ENCODE measurements at regions of chr7 and their contacts with region 1.

Region 1: DNA sequence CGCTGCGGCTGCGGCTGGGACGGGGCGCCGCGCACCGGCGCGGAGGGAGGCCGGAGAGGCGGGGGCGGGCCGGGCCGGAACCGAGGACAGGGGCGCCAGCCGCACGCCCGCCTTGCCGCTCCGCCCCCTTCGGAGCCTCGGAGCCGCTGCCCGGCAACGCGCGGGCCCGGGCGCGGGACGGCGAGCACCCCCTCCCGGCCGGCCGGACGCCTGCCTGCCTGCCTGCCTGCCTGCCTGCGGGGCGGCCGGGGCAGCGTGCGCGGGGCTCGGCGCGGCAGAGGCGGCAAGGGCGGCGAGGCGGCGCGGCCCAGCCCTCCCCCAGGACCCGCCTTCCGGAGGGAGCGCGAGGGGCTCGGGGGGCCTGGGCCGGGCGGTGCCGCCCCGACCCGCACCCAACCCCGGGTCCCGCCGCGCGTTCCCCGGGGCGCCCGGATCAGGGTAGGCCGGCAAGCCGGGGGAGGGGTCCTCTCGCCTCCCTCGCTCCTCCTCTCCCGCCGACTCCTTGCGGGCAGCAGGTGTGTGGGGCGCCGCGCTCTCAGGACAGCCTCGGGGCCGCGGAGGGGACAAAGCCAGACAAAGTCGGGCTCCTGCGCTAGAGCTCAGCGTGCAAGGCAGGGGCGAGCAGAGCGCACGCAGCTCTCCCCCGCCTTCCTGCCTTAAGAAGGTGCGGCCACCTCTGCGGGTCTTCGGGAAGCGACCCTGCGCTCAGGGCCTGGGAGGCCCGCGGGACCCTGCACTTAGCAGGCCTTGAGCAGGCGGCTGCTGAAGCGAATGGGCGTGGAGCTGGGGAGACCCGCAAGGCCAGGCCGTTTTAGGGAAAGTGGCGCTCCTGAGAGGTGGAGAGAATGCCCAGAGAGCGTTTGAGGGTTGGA is at the start of gene KIAA1549:
- DNase-seq: no peak
- total RNA-seq, gene KIAA1549: 1.4 TPM

Region 2: DNA sequence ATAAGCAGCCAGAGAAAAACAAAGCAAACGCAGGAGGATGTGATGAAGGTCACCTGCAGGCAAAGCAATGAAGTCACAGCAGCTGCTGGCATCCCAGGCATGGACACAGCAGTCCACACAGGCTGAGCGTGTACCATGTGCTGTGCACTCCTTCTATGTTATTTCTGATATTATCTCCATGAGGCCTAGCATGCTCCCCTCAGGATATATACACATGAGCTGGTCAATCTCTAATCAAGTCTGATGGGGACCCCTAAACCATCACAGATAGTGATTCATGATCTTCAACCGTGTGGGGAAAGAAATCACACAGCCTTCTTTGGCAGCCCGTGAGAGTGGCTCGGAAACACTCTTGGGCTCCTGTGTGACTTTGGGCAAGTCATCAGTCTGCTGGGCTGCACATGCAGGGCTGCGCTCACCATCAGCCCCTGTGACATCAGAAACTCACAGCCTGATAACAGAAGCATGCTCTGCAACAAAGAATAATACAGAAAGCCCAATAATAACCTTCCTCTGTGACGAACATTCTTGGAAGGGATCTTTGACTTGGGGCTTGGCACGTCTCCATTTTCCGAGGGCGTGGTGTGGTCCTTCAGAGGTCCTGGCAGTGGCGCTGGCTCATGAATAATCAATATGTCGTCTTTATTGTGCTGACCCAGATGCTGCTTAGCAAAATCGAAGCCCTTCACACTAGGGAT is 100.5 kb before region 1 on chr7:
- intact Hi-C with region 1: loop called (anchors 5 kb)
- DNase-seq: no peak

Measured in cardiac septum (tissue), 1 donor.